ENCODE measurements at regions of chr13 and their contacts with region 1.

Region 1: GRCh38 chr13:99656092-99656745 is 154.9 kb downstream of the TM9SF2 start:
- DNase-seq: peak; percentile 63 to 73 (median 68)
- ATAC-seq: peak; percentile 94
- H3K4me3 ChIP-seq: no peak overlapping the region
- H3K27ac ChIP-seq: no peak overlapping the region
- H3K4me1 ChIP-seq: no peaks in the 10 kb centered on the region; a peak in 2 of 5 replicates
- H3K27me3 ChIP-seq: peaks cover 0 to 5% of the 10 kb centered on the region in 2 experiments; a peak in 1 of 5 replicates
- CTCF ChIP-seq: peak; percentile 79 to 88 (median 81)
- EP300 ChIP-seq: no peak
- POLR2A ChIP-seq: no peak
- RAD21 ChIP-seq: peak; percentile 62 to 81

Region 2: DNA sequence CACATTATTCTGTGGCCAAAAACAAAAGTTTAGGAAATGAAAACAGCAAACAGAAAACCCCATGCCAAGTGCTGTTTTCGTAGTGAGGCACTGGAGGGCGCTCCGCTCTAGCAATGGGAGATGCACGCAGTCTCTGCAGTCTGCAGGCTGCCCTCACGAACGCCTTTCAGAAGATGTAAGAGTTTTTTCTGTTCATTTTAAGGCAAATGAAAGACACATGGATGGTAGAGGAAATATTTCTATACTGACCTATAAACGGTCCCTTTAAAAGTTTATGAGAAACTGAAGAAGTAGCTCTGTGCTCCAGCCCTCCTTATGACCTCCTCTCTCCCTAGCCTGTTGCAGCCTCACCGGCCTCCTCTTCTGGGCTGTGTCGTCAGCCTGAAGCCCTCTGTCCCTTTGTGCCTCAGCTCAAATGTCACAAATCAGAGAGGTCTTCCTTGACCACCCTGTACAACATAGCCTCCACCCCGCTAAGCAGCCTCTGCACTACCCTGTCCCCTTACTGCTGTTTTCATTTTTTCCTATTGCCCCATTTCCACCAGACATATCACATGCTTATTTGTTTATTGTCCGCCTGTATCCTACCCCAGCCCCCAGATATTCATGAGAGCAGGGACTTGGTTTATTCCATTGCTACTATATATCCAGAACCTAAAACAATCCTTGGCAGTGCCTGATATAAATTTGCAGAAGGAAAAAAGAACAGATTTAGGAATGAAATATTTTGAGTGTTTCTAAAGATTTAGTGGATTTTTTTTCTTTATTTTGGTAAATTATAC is 38.6 kb before region 1 on chr13:
- CTCF ChIA-PET with region 1: no interaction called
- POLR2A ChIA-PET with region 1: no interaction called
- in situ Hi-C with region 1: no loop called
- intact Hi-C with region 1: loop called (anchors 5 kb)
- DNase-seq: peak; percentile 20 to 54 (median 26)
- ATAC-seq: peak; percentile 79
- H3K4me3 ChIP-seq: no peak overlapping the region
- H3K27ac ChIP-seq: no peak overlapping the region
- H3K4me1 ChIP-seq: peaks cover 3 to 4% of the 10 kb centered on the region in 2 experiments; a peak in 3 of 5 replicates
- H3K27me3 ChIP-seq: no peaks in the 10 kb centered on the region
- CTCF ChIP-seq: peak; percentile 64 to 76 (median 71)
- EP300 ChIP-seq: no peak
- POLR2A ChIP-seq: no peak
- RAD21 ChIP-seq: peak; percentile 59 to 76

Region 3: DNA sequence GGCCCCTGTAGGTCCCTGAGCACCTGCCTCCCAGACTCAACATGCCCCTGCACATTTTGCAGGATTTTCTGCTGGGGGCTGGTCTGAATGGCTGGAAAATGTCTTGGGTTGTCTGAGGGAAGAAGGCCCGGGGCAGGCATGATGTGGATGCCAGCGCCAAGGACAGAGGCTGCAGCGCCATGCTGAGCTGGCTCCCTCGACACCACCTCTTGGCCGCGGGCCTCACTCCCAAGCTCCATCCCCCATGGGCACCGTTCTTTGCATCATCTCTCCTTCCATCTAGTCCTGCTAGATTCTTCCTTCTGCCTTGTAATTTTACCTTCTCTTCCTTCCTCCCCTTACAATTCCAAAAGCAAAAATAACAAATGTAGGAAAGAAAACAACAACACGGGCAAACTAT is 244.7 kb after region 1 on chr13:
- CTCF ChIA-PET with region 1: no interaction called
- POLR2A ChIA-PET with region 1: no interaction called
- in situ Hi-C with region 1: no loop called
- intact Hi-C with region 1: loop called (anchors 5 kb)
- DNase-seq: no peak
- ATAC-seq: no peak
- H3K4me3 ChIP-seq: no peak overlapping the region
- H3K27ac ChIP-seq: no peak overlapping the region
- H3K4me1 ChIP-seq: no peaks in the 10 kb centered on the region
- H3K27me3 ChIP-seq: peaks cover 8 to 29% of the 10 kb centered on the region in 2 experiments; a peak in 4 of 5 replicates
- CTCF ChIP-seq: no peak
- EP300 ChIP-seq: no peak
- POLR2A ChIP-seq: no peak
- RAD21 ChIP-seq: no peak

Region 4: GRCh38 chr13:99916366-99917103 is 260.3 kb after region 1 on chr13:
- CTCF ChIA-PET with region 1: no interaction called
- POLR2A ChIA-PET with region 1: no interaction called
- in situ Hi-C with region 1: no loop called
- intact Hi-C with region 1: loop called (anchors 5 kb)
- DNase-seq: peak; percentile 53 to 61 (median 58)
- ATAC-seq: peak; percentile 94
- H3K4me3 ChIP-seq: no peak overlapping the region
- H3K27ac ChIP-seq: no peak overlapping the region
- H3K4me1 ChIP-seq: no peaks in the 10 kb centered on the region; a peak in 1 of 5 replicates
- H3K27me3 ChIP-seq: peaks cover 4 to 13% of the 10 kb centered on the region in 2 experiments; a peak in 4 of 5 replicates
- CTCF ChIP-seq: peak; percentile 80 to 100 (median 99)
- EP300 ChIP-seq: no peak
- POLR2A ChIP-seq: no peak
- RAD21 ChIP-seq: peak; percentile 87 to 91

Region 5: GRCh38 chr13:100542826-100543156 is 886.6 kb after region 1 on chr13:
- CTCF ChIA-PET with region 1: no interaction called
- POLR2A ChIA-PET with region 1: no interaction called
- in situ Hi-C with region 1: loop called (anchors 25 kb)
- intact Hi-C with region 1: no loop called
- DNase-seq: peak in 3 of 4 experiments; percentile 10 to 15 (median 14)
- ATAC-seq: peak; percentile 61
- H3K4me3 ChIP-seq: no peak overlapping the region
- H3K27ac ChIP-seq: no peak overlapping the region
- H3K4me1 ChIP-seq: peaks cover 0 to 3% of the 10 kb centered on the region in 2 experiments; a peak in 1 of 5 replicates
- H3K27me3 ChIP-seq: peaks cover 0 to 5% of the 10 kb centered on the region in 2 experiments; a peak in 1 of 5 replicates
- CTCF ChIP-seq: peak; percentile 20 to 51 (median 21); a peak in 3 of 6 replicates
- EP300 ChIP-seq: no peak
- POLR2A ChIP-seq: no peak
- RAD21 ChIP-seq: peak in 1 of 2 experiments; percentile 39; a peak in 2 of 4 replicates